ENCODE measurements at regions of chr19 and their contacts with region 1.

Region 1: GRCh38 chr19:13597640-13598039 is 91.4 kb upstream of the CACNA1A start:
- DNase-seq: no peak
- H3K4me3 ChIP-seq: no peak overlapping the region
- H3K27me3 ChIP-seq: no peaks in the 10 kb centered on the region; the same call in 1 of the 2 replicates
- CTCF ChIP-seq: peak; percentile 66

Region 2: GRCh38 chr19:13548131-13548530 is 49.5 kb before region 1 on chr19:
- CTCF ChIA-PET with region 1: no interaction called
- POLR2A ChIA-PET with region 1: no interaction called
- DNase-seq: no peak
- H3K4me3 ChIP-seq: no peak overlapping the region
- H3K27me3 ChIP-seq: no peaks in the 10 kb centered on the region; the same call in none of the 2 replicates
- CTCF ChIP-seq: no peak

Region 3: DNA sequence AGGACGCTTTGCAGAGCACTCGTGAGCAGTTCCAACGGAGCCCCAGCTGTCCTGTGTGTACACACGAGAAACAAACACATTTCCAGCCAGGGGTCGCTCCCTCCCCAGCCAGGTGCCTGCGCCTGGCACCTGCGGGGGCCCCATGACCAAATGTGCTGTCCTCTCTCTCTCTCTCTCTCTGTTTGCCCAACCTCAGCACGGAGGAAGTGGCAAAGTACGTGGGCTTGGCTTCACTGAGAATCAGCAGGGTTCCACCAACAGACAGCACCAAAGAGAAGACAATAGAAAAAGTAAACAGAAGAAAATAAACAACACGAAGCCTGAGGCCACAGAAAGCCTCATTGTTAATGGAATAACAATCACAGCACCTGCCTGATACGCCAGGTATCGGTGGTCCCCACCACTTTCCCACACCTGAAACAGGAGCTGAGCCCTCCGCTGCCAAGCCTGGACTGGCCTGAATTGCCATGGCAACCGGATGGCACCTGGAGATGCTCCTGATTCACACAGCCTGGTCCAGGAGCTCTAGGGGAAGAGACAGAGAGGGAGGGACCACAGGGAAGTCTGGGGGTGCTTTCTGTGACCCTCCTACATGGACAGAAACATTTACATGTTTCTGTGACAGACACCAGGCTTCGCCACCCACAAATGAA is 12.5 kb after region 1 on chr19:
- CTCF ChIA-PET with region 1: interaction called, 15 read pairs
- POLR2A ChIA-PET with region 1: no interaction called
- DNase-seq: no peak
- H3K4me3 ChIP-seq: no peak overlapping the region
- H3K27me3 ChIP-seq: no peaks in the 10 kb centered on the region; the same call in 1 of the 2 replicates
- CTCF ChIP-seq: no peak

Region 4: DNA sequence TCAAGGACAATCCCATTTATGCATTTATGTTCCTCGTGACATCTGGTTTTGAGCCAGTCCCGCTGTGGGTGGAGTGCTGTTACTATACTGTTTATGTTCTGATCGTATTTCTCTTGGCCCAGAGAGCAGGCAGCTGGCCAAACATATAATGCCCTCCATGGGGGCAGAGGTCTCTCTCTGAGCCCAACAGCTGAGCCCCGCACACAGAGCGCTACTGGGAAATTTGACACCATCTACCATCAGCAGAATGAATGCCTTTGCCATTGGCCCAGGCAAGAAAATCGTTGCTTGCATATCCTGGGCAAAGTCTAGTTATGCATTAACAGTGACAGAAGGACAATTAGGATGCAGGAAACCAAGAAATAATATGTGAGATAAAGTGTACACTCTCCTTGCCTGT is 35.5 kb after region 1 on chr19:
- CTCF ChIA-PET with region 1: no interaction called
- POLR2A ChIA-PET with region 1: no interaction called
- DNase-seq: no peak
- H3K4me3 ChIP-seq: no peak overlapping the region
- H3K27me3 ChIP-seq: no peaks in the 10 kb centered on the region
- CTCF ChIP-seq: no peak

Region 5: GRCh38 chr19:13652810-13653590 is 55.4 kb after region 1 on chr19:
- CTCF ChIA-PET with region 1: no interaction called
- POLR2A ChIA-PET with region 1: no interaction called
- DNase-seq: no peak
- H3K4me3 ChIP-seq: no peak overlapping the region
- H3K27me3 ChIP-seq: no peaks in the 10 kb centered on the region
- CTCF ChIP-seq: no peak

Region 6: DNA sequence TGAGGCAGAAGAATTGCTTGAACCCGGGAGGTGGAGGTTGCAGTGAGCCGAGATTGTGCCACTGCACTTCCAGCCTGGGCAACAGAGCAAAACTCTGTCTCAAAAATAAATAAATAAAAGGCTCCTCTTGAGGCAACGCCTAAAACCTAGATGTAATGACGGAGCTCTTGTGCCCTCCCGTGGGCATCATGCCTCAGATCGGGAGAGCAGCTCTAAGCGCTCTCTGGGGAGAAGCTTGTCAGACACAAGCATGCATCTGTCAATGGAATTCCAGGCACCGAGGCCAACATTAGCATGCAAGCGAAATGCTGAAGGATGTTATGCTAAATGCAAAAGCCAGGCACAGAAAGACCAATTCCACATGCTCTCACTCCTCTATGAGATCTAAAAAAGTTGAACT is 121.1 kb after region 1 on chr19:
- CTCF ChIA-PET with region 1: interaction called, 105 read pairs
- POLR2A ChIA-PET with region 1: no interaction called
- DNase-seq: no peak
- H3K4me3 ChIP-seq: no peak overlapping the region
- H3K27me3 ChIP-seq: no peaks in the 10 kb centered on the region
- CTCF ChIP-seq: peak; percentile 51